Endothelial cell of umbilical vein (primary cell): ENCODE measurements at regions of chr15 and their contacts with region 1.

Region 1: DNA sequence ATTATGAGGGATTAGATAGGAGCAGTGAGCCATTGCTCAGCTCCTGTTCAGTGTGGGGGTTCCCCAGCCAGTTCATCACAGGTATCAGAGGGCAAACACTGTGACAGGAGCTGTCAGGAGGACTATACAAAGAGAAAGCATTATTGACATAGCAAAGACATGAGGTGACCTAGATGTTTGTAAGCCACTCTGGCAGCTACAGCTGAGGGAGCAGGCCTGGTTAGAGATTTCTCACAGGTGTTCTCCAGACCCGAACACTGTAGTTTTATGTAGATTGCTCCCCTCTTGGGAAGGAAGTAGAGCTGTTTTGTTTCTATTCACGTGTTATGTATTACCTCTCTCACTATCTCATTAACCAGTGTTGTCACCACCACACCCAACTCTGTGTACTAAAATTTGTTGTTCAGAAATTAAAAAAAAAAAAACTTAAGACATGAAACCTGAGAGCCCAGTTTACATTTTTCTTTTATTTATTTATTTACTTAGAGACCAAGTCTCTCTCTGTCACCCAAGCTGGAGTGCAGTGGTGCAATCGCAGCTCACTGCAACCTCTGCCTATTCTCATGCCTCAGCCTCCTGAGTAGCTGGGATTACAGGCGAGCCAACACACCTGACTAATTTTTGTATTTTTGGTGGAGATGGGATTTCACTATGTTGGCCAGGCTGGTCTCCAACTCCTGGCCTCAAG is 123.7 kb downstream of the RBPMS2 start:
- DNase-seq: no peak
- H3K4me3 ChIP-seq: no peak overlapping the region
- H3K27ac ChIP-seq: no peak overlapping the region
- H3K4me1 ChIP-seq: no peaks in the 10 kb centered on the region
- H3K27me3 ChIP-seq: no peaks in the 10 kb centered on the region
- CTCF ChIP-seq: no peak
- POLR2A ChIP-seq: no peak

Region 2: GRCh38 chr15:64209680-64210334 is 441.9 kb before region 1 on chr15:
- CTCF ChIA-PET with region 1: interaction called, 7 read pairs
- POLR2A ChIA-PET with region 1: no interaction called
- dilution Hi-C with region 1: no loop called
- intact Hi-C with region 1: loop called (anchors 10 kb)
- DNase-seq: peak; percentile 77
- H3K4me3 ChIP-seq: no peak overlapping the region
- H3K27ac ChIP-seq: no peak overlapping the region
- H3K4me1 ChIP-seq: peaks cover 2% of the 10 kb centered on the region
- H3K27me3 ChIP-seq: no peaks in the 10 kb centered on the region
- CTCF ChIP-seq: peak; percentile 20 to 31
- POLR2A ChIP-seq: no peak

Region 3: DNA sequence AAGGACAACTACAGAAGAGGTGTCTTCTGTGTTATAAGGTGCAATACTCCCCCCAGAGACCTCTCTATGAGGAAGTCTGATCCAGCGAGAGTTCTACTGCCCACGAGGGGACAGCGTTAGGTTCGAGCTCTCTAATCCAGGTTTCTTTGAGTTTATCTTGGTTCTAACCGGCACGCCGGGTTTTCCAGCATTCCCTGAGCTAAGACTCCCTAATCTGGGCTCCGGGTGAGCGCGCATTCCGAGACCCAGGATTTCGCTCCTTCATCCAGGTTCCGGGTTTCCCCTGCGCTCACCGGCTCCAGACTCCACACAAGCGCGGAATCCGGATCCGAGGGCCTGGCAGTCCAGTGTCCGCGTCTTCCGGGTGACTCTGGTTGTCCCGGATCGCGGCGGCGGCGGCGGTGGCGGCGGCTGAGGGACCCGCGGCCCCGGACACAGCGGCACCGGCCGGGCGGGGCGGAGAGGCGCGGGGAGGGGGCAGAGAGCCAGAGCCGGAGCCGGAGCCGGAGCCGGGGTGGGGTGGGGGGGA is 191.4 kb before region 1 on chr15 and contains the start of gene ZNF609:
- CTCF ChIA-PET with region 1: interaction called, 16 read pairs
- POLR2A ChIA-PET with region 1: no interaction called
- dilution Hi-C with region 1: no loop called
- intact Hi-C with region 1: no loop called
- DNase-seq: peak; percentile 90
- H3K4me3 ChIP-seq: peak within 1 kb of the TSS; percentile 61 to 93 (median 80)
- H3K27ac ChIP-seq: peak within 1 kb of the TSS; percentile 59
- H3K4me1 ChIP-seq: peaks cover 21% of the 10 kb centered on the region
- H3K27me3 ChIP-seq: no peaks in the 10 kb centered on the region
- CTCF ChIP-seq: no peak
- POLR2A ChIP-seq: no peak
- total RNA-seq, gene ZNF609: 49.6 and 52.8 TPM in 2 replicates

Region 4: DNA sequence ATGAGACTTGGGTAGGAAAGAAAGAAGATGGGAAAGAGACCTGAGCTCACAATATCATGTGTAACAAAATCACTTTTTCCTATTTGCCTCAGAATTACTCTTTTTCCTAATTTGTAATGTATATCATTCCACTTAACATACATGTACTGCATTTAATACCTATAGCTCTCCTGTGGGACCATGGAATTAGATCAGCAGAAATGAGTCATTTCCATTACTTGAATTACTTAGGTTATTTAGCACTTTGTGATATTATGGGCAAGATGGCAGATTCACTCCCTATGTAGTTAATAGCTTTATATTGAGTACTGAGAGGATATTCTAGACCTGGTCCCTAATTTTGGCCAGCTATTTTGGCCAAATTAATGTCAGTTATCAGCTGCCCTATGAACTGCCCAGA is 120.8 kb before region 1 on chr15:
- CTCF ChIA-PET with region 1: interaction called, 11 read pairs
- POLR2A ChIA-PET with region 1: no interaction called
- dilution Hi-C with region 1: no loop called
- intact Hi-C with region 1: no loop called
- DNase-seq: peak; percentile 41
- H3K4me3 ChIP-seq: no peak overlapping the region
- H3K27ac ChIP-seq: no peak overlapping the region
- H3K4me1 ChIP-seq: peaks cover 34% of the 10 kb centered on the region
- H3K27me3 ChIP-seq: no peaks in the 10 kb centered on the region
- CTCF ChIP-seq: no peak
- POLR2A ChIP-seq: no peak

Region 5: DNA sequence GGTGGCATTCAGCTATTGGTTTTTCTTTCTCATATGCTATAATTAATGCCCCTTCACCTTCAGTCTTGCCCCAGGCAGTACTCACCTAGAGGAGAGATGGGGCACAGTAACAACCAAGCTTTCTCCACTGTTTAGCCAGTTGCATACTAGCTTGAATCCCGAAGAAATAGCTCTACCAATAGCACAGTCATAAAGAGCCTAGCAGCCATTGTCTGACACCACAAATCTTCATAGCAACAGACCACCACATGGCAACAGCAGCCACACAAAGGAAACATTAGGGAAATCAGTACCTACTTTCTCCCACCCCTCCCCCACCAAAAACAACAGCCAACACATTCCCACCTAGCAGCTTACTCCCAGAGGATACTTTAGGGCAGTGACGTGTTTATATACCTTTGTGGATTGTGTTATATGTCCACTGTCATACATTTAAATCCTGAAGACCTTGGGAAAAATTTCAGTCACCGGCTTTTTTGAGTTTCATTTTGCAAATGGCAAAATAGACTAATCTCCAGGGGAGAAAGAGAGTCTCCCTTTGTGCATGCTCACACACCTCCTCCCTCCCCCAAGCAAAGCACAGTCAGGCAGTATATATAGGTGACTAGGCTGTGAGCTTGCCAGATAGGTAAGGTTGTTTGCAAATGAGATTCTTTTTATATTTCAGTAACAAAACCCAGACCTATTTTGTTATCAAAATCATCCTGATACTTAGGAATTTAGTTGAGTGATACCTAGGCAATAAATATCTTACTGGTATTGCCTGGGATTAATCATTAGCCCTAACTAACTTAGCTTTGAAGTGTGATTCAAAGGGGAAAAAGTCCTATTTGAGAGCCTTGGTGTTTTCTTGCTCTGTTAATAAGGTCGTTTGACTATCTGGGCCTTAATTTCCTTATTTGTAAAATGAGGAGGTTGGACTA is 16.9 kb before region 1 on chr15:
- CTCF ChIA-PET with region 1: interaction called, 12 read pairs
- POLR2A ChIA-PET with region 1: no interaction called
- dilution Hi-C with region 1: no loop called
- intact Hi-C with region 1: no loop called
- DNase-seq: peak; percentile 79
- H3K4me3 ChIP-seq: no peak overlapping the region
- H3K27ac ChIP-seq: peak overlapping the region; percentile 16
- H3K4me1 ChIP-seq: peaks cover 6% of the 10 kb centered on the region
- H3K27me3 ChIP-seq: no peaks in the 10 kb centered on the region
- CTCF ChIP-seq: no peak
- POLR2A ChIP-seq: no peak